ENCODE measurements at regions of chrX and their contacts with region 1.

Region 1: DNA sequence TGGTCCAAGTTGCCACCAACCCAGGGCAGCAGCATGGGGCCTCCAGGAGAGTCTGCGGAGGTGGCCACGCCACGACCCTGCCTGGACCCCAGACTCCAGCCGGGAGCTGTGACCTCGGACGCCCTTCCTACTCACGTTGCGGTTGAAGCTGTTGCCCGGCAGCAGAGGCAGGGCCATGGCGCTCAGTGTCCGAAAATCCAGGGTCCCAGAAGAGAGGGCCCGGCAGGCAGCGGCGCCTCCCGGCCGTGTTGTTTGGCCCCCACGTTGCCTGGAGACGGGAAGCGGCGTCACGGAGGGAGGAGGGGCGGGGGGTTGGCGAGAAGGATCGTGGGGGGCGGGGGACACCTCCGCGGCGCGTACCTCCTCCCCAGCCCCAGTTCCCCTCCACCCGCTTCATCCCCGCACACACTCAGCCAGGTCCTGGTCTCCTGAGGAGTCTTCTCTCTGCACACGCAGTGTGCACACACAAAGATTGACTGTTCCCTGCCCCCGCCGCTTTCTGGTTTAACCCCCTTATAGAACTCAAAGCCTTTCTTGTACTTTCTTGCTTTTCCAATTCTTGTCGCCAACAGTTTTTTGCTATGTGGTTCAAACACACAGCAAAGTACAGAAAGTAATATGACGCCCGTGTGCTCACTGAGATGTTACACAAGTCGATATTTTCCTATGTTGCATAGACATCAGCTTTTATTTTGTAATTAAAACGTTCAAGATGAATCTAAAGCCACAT is at the start of gene EFHC2:
- DNase-seq: no peak
- ATAC-seq: peak; percentile 83
- H3K4me3 ChIP-seq: peak within 1 kb of the TSS; percentile 32 to 66
- H3K27ac ChIP-seq: no peak within 1 kb of the TSS
- H3K4me1 ChIP-seq: peaks cover 3% of the 10 kb centered on the region; the same call in 1 of the 2 replicates
- H3K27me3 ChIP-seq: no peaks in the 10 kb centered on the region
- CTCF ChIP-seq: no peak
- total RNA-seq, gene EFHC2: 0.28 TPM

Region 2: GRCh38 chrX:44105228-44105914 is 238.2 kb before region 1 on chrX:
- CTCF ChIA-PET with region 1: no interaction called
- POLR2A ChIA-PET with region 1: no interaction called
- in situ Hi-C with region 1: no loop called
- intact Hi-C with region 1: no loop called
- DNase-seq: no peak
- ATAC-seq: no peak
- H3K4me3 ChIP-seq: no peak overlapping the region
- H3K27ac ChIP-seq: no peak overlapping the region
- H3K4me1 ChIP-seq: no peaks in the 10 kb centered on the region
- H3K27me3 ChIP-seq: no peaks in the 10 kb centered on the region
- CTCF ChIP-seq: peak; percentile 31

Region 3: GRCh38 chrX:44291468-44292113 is 52.0 kb before region 1 on chrX:
- CTCF ChIA-PET with region 1: no interaction called
- POLR2A ChIA-PET with region 1: no interaction called
- in situ Hi-C with region 1: no loop called
- intact Hi-C with region 1: loop called (anchors 1 kb)
- DNase-seq: no peak
- ATAC-seq: no peak
- H3K4me3 ChIP-seq: no peak overlapping the region
- H3K27ac ChIP-seq: no peak overlapping the region
- H3K4me1 ChIP-seq: no peaks in the 10 kb centered on the region
- H3K27me3 ChIP-seq: no peaks in the 10 kb centered on the region
- CTCF ChIP-seq: no peak

Region 4: DNA sequence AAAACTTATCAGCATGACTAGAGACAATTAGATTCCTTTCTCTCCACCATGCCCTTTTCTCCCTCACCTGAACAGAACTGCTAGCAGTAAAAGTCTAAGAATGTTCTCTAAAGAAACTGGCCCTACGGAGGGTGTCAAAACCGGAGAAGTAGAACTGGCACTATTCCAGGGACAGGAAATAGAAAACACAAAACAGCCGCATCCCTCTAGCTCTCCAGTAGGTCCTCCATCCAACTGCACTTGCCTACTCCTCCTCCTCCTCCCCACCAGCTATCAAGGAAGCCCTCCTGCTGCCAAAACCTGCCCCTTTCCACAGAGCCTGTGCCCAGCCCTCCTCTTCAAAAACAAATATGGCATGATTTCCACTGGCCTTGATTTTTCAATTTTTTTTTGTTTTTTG is 170.7 kb after region 1 on chrX:
- CTCF ChIA-PET with region 1: no interaction called
- POLR2A ChIA-PET with region 1: no interaction called
- in situ Hi-C with region 1: no loop called
- intact Hi-C with region 1: no loop called
- DNase-seq: no peak
- ATAC-seq: no peak
- H3K4me3 ChIP-seq: no peak overlapping the region
- H3K27ac ChIP-seq: no peak overlapping the region
- H3K4me1 ChIP-seq: no peaks in the 10 kb centered on the region
- H3K27me3 ChIP-seq: no peaks in the 10 kb centered on the region
- CTCF ChIP-seq: no peak

Measured in Panc1 (cell line).